Naive thymus-derived CD4-positive, alpha-beta T cell (primary cell): ENCODE measurements at regions of chr17 and their contacts with region 1.

Region 1: DNA sequence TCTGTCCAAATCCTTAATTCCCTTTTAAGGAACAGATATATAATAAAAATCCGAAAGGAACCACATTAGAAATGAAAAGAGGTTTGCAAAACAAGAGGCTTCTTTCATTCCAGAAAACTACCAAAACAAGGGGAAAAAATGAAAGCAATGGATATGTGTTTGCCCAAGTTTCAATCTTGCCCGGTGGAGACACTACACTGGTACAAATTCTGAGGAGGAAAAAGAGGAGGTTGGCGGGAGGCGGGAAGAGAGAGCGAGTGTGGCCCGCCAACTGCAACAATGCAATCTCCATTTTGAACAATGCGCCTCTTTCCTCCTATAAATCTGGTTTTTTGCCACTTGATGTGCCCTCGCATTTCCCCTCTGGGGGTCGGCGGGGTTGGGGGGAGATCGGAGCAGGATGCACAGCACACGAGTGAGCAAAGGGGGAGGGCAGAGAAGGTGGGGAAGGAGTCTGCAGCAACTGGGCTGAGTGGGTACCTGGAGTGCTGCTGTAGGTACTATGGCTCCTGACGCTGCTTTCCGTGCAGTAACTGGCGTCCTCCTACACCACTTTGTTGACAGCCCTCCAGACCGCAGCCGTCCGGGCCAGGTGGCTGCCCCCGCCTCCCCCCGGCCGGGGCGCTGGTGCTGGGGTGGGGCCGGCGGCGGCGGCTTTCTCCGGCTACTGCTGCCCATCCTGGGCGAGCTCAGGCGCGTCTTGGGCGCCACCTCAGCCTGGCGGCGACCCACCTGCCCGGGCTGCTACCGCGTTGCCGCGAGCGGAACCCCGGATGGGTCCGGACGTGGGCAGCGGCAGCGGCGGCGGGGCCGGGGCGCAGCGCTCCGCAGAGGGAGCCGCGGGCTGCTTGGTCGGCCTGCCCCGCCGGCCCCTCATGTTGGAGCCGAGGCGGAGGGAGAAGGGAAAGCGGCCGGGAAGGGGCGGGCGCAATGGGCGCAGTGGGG is 93.8 kb upstream of the PLEKHM1 start:
- DNase-seq: peak; percentile 59 to 84 (median 64)
- ATAC-seq: peak; percentile 59
- H3K4me3 ChIP-seq: peak overlapping the region; percentile 81
- H3K4me3 Mint-ChIP-seq: peak overlapping the region; percentile 85 to 99 (median 97)
- H3K27ac ChIP-seq: peak overlapping the region; percentile 85
- H3K27ac Mint-ChIP-seq: peak overlapping the region; percentile 90 to 99 (median 96)
- H3K4me1 ChIP-seq: peaks cover 8 to 11% of the 10 kb centered on the region in 2 donors
- H3K4me1 Mint-ChIP-seq: peaks cover 20 to 52% (median 47%) of the 10 kb centered on the region in 7 donors
- H3K27me3 ChIP-seq: no peaks in the 10 kb centered on the region
- H3K27me3 Mint-ChIP-seq: peaks cover 0 to 2% (median 0%) of the 10 kb centered on the region in 5 donors

Region 2: GRCh38 chr17:45228763-45229539 is 355.4 kb before region 1 on chr17:
- CTCF ChIA-PET with region 1: no interaction called
- POLR2A ChIA-PET with region 1: no interaction called
- intact Hi-C with region 1: loop called in 1 of 2 experiments (anchors 5 kb)
- DNase-seq: peak; percentile 64 to 92 (median 74)
- ATAC-seq: peak; percentile 66
- H3K4me3 ChIP-seq: peak overlapping the region; percentile 91
- H3K4me3 Mint-ChIP-seq: peak overlapping the region; percentile 83 to 99 (median 96)
- H3K27ac ChIP-seq: peak overlapping the region; percentile 96
- H3K27ac Mint-ChIP-seq: peak overlapping the region; percentile 96 to 100 (median 99)
- H3K4me1 ChIP-seq: peaks cover 62 to 77% of the 10 kb centered on the region in 2 donors
- H3K4me1 Mint-ChIP-seq: peaks cover 54 to 91% (median 77%) of the 10 kb centered on the region in 7 donors
- H3K27me3 ChIP-seq: no peaks in the 10 kb centered on the region
- H3K27me3 Mint-ChIP-seq: no peaks in the 10 kb centered on the region

Region 3: GRCh38 chr17:45428050-45428617 is 156.2 kb before region 1 on chr17:
- CTCF ChIA-PET with region 1: no interaction called
- POLR2A ChIA-PET with region 1: no interaction called
- intact Hi-C with region 1: loop called in 1 of 2 experiments (anchors 5 kb)
- DNase-seq: peak; percentile 62 to 93 (median 81)
- ATAC-seq: peak; percentile 87
- H3K4me3 ChIP-seq: peak overlapping the region; percentile 17
- H3K4me3 Mint-ChIP-seq: peak overlapping the region; percentile 70 to 81 (median 78)
- H3K27ac ChIP-seq: no peak overlapping the region
- H3K27ac Mint-ChIP-seq: peak overlapping the region in 5 of 9 donors; percentile 3 to 82 (median 15)
- H3K4me1 ChIP-seq: peaks cover 11 to 14% of the 10 kb centered on the region in 2 donors
- H3K4me1 Mint-ChIP-seq: peaks cover 14 to 27% (median 25%) of the 10 kb centered on the region in 7 donors
- H3K27me3 ChIP-seq: no peaks in the 10 kb centered on the region
- H3K27me3 Mint-ChIP-seq: no peaks in the 10 kb centered on the region

Region 4: DNA sequence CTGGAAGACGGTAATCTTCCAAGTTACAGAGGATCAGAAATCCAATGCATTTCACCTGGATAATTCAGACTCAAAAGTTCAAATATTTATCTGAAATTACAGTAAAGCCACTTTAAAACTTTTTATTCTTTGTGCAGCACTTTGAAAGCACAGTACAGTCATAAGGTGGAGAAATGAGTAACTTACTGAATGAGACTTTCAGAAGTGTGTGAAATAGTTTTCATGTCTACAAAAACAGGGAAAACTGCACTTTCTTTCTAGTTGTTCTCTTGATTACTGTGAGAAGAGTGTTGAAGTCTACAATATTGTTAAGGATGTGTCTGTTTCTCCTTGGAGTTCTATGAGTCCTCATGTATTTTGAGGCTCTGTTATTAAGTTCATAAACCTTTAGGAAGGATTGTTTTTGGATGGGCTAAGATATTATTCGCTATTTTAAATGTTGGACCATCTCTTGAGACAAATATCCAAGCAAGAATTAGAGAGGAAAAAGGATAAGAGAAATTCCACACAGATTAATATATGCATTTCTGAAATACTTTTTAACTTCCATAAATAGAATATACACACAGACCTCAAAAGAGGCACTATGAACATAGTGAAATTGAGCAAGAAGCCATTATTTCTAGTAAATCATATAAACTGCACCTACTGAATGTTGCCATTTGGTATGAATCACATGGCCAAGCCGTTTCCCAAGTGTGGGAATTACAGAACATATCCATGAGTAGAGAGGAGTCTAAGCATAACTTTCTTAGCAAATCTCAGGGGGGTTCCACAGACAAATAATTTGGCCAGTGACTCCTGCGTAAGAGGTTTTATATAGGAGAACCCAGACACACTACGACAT is 10.2 kb before region 1 on chr17:
- CTCF ChIA-PET with region 1: no interaction called
- POLR2A ChIA-PET with region 1: no interaction called
- intact Hi-C with region 1: no loop called
- DNase-seq: no peak
- ATAC-seq: peak; percentile 9
- H3K4me3 ChIP-seq: no peak overlapping the region
- H3K4me3 Mint-ChIP-seq: no peak overlapping the region
- H3K27ac ChIP-seq: no peak overlapping the region
- H3K27ac Mint-ChIP-seq: peak overlapping the region in 2 of 9 donors; percentile 2 to 39
- H3K4me1 ChIP-seq: no peaks in the 10 kb centered on the region
- H3K4me1 Mint-ChIP-seq: peaks cover 35 to 55% (median 49%) of the 10 kb centered on the region in 7 donors
- H3K27me3 ChIP-seq: no peaks in the 10 kb centered on the region
- H3K27me3 Mint-ChIP-seq: no peaks in the 10 kb centered on the region

Region 5: GRCh38 chr17:46266656-46267544 is 682.5 kb after region 1 on chr17:
- CTCF ChIA-PET with region 1: no interaction called
- POLR2A ChIA-PET with region 1: interaction called, 3 read pairs
- intact Hi-C with region 1: loop called in 1 of 2 experiments (anchors 5 kb)
- DNase-seq: peak; percentile 44 to 94 (median 81)
- ATAC-seq: peak; percentile 87
- H3K4me3 ChIP-seq: peak overlapping the region; percentile 79
- H3K4me3 Mint-ChIP-seq: peak overlapping the region; percentile 89 to 96 (median 93)
- H3K27ac ChIP-seq: peak overlapping the region; percentile 79
- H3K27ac Mint-ChIP-seq: peak overlapping the region; percentile 76 to 95 (median 85)
- H3K4me1 ChIP-seq: peaks cover 25% of the 10 kb centered on the region in 2 donors
- H3K4me1 Mint-ChIP-seq: peaks cover 18 to 38% (median 34%) of the 10 kb centered on the region in 7 donors
- H3K27me3 ChIP-seq: no peaks in the 10 kb centered on the region
- H3K27me3 Mint-ChIP-seq: peaks cover 0 to 52% (median 0%) of the 10 kb centered on the region in 5 donors

Region 6: DNA sequence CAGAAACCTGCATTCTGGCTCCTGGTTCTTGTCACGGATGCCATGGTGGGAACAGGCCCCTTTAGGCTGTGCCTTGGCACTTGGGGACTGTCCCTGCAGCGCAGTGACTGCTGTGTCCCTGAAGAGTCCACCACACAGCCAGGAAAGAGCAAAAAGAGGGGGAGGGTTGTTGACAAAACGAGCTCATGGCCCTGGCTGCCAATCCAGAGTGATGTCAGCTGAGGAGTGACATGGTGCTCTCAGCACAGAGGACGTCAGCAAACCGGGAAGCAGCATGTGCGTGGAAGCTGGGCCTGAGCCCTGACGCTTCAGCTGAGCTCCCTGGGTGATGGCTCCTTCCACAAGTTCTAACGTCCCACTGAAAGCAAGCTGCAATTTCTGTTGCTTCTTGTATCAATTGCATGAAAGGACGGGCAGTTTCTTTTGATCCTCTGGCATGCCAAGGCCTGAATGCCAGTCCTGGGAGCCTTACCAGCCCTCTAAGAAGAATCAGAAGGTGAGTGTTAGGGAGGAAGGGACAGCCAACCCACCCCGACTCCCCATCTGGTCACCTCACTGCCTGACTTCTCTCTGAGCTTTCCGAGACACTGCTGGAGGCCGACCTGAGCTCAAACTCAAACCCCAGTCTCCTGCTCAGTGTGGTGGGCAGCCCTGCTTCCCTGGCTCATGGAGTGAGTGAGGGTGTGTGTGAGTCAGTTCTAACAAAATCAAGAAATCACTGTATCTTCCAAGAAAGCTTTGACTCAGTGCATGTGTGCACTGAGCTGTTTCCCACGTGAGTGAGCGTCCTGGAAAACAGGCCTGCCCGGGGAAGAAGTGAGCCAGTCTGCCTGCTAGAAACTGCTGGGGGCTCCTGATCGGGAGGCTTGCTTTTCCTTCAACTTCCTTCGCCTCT is 1248.8 kb after region 1 on chr17:
- CTCF ChIA-PET with region 1: no interaction called
- POLR2A ChIA-PET with region 1: no interaction called
- intact Hi-C with region 1: loop called in 1 of 2 experiments (anchors 10 kb)
- DNase-seq: no peak
- ATAC-seq: no peak
- H3K4me3 ChIP-seq: no peak overlapping the region
- H3K4me3 Mint-ChIP-seq: no peak overlapping the region
- H3K27ac ChIP-seq: no peak overlapping the region
- H3K27ac Mint-ChIP-seq: no peak overlapping the region
- H3K4me1 ChIP-seq: no peaks in the 10 kb centered on the region
- H3K4me1 Mint-ChIP-seq: peaks cover 0 to 5% (median 0%) of the 10 kb centered on the region in 7 donors
- H3K27me3 ChIP-seq: no peaks in the 10 kb centered on the region
- H3K27me3 Mint-ChIP-seq: peaks cover 1 to 17% (median 11%) of the 10 kb centered on the region in 5 donors

Region 7: GRCh38 chr17:46922804-46923635 is 1338.7 kb after region 1 on chr17 and contains the start of gene GOSR2:
- CTCF ChIA-PET with region 1: no interaction called
- POLR2A ChIA-PET with region 1: no interaction called
- intact Hi-C with region 1: loop called in 1 of 2 experiments (anchors 10 kb)
- DNase-seq: peak; percentile 75 to 91 (median 87)
- ATAC-seq: peak; percentile 98
- H3K4me3 ChIP-seq: peak within 1 kb of the TSS; percentile 84
- H3K4me3 Mint-ChIP-seq: peak within 1 kb of the TSS; percentile 86 to 97 (median 92)
- H3K27ac ChIP-seq: peak within 1 kb of the TSS; percentile 78
- H3K27ac Mint-ChIP-seq: peak within 1 kb of the TSS; percentile 97 to 100 (median 100)
- H3K4me1 ChIP-seq: peaks cover 16 to 32% of the 10 kb centered on the region in 2 donors
- H3K4me1 Mint-ChIP-seq: peaks cover 35 to 59% (median 52%) of the 10 kb centered on the region in 7 donors
- H3K27me3 ChIP-seq: no peaks in the 10 kb centered on the region
- H3K27me3 Mint-ChIP-seq: peaks cover 0 to 4% (median 0%) of the 10 kb centered on the region in 5 donors
- total RNA-seq, gene GOSR2: 62.1 to 95.5 (median 71.0) TPM